Activated CD8-positive, alpha-beta T cell treated with anti-CD3 and anti-CD28 coated beads for 36 hours (primary cell): ENCODE measurements at regions of chr14 and their contacts with region 1.

Region 1: GRCh38 chr14:64338616-64339316 is 44.6 kb upstream of the ESR2 start:
- DNase-seq: peak; percentile 94
- ATAC-seq: peak; percentile 87
- H3K4me3 Mint-ChIP-seq: peak overlapping the region; percentile 96
- H3K27ac Mint-ChIP-seq: peak overlapping the region; percentile 96
- H3K4me1 Mint-ChIP-seq: peaks cover 19% of the 10 kb centered on the region
- H3K27me3 Mint-ChIP-seq: no peaks in the 10 kb centered on the region
- CTCF ChIP-seq: no peak

Region 2: GRCh38 chr14:64387694-64388532 is 49.1 kb after region 1 on chr14 and contains the start of gene MTHFD1:
- CTCF ChIA-PET with region 1: interaction called, 13 read pairs
- POLR2A ChIA-PET with region 1: interaction called, 34 read pairs
- intact Hi-C with region 1: no loop called
- DNase-seq: peak; percentile 99
- ATAC-seq: peak; percentile 94
- H3K4me3 Mint-ChIP-seq: peak within 1 kb of the TSS; percentile 100
- H3K27ac Mint-ChIP-seq: peak within 1 kb of the TSS; percentile 99
- H3K4me1 Mint-ChIP-seq: peaks cover 33% of the 10 kb centered on the region
- H3K27me3 Mint-ChIP-seq: no peaks in the 10 kb centered on the region
- CTCF ChIP-seq: no peak
- total RNA-seq, gene MTHFD1: 237 to 241 TPM

Region 3: DNA sequence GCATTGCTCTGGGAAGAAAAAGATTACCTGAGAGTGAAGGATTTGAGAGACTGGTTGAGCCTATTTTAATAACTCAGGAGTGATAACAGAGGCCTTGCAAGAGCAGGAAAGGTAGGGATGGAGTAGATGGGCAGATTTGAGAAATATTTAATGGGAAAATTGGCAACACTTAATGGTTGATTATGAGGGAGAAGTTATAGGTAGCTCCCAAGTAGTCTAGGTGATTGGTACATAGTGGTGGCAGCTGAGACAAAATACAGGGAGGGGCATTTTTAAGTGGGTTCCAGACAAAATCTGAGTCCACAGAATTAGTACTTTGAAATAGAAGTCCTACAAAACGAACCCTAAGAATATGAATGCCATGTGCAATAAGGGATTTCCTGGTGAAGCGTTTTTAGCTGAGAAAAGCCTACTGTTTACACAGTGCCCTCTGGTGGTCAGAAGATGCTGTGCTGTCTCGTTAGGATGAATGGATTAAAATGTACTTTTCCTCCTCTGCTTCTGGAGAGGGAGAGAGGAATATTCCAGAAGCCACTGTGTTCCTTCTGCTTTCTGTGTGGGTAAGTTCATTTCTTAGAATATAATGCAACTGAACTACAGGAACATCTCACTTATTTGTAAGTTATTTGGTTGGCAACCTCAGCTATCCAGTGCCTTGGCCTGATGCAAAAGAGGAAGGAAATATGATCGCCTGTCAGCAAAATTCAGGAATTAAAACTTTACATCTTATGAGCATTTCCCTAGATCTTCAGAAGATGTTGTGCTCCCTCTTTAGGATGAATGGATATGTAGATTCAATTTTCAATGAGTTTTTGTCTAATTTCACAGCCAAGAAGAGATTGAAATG is 172.3 kb after region 1 on chr14:
- CTCF ChIA-PET with region 1: interaction called, 17 read pairs
- POLR2A ChIA-PET with region 1: no interaction called
- intact Hi-C with region 1: no loop called
- DNase-seq: peak; percentile 81
- ATAC-seq: peak; percentile 28
- H3K4me3 Mint-ChIP-seq: peak overlapping the region; percentile 41
- H3K27ac Mint-ChIP-seq: peak overlapping the region; percentile 76
- H3K4me1 Mint-ChIP-seq: peaks cover 70% of the 10 kb centered on the region
- H3K27me3 Mint-ChIP-seq: no peaks in the 10 kb centered on the region
- CTCF ChIP-seq: peak; percentile 90